ENCODE measurements at regions of chr6 and their contacts with region 1.

Region 1: DNA sequence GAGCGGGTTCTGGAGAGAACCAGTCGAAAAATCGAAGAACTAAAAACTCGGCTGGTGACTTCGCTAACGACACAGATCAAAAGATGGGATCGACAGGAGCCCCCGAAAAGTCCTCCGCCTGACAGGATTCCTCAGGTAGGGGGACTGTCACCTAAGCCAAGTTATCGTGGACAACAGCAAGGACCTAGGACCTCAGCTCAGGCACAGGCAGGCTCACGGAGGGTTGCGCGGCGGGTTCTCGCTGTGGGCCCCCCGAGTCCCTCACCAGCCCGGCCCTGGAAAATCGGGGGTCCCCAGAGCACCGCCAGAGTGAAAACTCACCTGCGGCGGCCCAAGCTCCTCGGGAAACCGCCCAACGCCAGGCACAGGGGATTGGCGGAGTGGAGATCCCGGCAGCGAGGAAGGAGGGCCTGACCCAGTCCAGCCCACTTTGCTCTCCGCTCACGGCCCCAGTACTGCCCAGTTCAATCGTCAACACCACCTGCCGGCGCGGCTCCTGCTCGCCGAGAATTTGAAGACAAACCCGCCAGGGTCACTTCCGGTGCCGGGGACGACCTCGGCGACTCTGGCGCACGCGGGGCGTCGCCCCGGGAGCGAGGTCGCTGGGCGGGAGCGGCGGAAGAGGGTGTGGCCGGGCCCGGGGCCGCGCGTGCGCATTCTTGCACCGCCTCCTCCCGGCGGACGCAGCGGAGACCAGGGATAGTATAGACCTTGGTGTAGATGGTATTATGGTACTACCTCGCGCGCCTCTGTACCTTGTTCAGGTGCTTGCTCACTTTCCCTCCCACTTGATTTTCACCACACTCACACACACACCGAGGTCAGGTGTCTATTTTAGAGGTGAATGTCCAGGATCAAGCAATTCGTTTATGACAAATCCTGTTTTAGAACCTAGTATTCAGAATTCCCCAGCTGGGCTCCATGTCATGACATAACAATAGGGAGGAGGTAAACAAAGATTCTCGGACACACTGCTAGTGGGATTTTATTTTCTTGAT is at the start of gene KATNA1:
- DNase-seq: peak; percentile 78
- H3K4me3 ChIP-seq: peak within 1 kb of the TSS; percentile 76 to 77
- H3K27ac ChIP-seq: peak within 1 kb of the TSS; percentile 82 to 87
- H3K4me1 ChIP-seq: no peaks in the 10 kb centered on the region
- H3K27me3 ChIP-seq: no peaks in the 10 kb centered on the region
- CTCF ChIP-seq: peak in 2 of 4 experiments; percentile 14 to 25
- POLR2A ChIP-seq: peak; percentile 77
- total RNA-seq, gene KATNA1: 12.8 to 25.2 TPM

Region 2: GRCh38 chr6:149717588-149718458 is 69.4 kb after region 1 on chr6 and contains the start of gene LATS1:
- intact Hi-C with region 1: loop called (anchors 2 kb)
- DNase-seq: peak; percentile 87
- H3K4me3 ChIP-seq: peak within 1 kb of the TSS; percentile 77 to 95
- H3K27ac ChIP-seq: peak within 1 kb of the TSS; percentile 97 to 99
- H3K4me1 ChIP-seq: peaks cover 6% of the 10 kb centered on the region
- H3K27me3 ChIP-seq: no peaks in the 10 kb centered on the region
- CTCF ChIP-seq: no peak
- POLR2A ChIP-seq: peak; percentile 65
- total RNA-seq, gene LATS1: 28.7 to 44.8 TPM